Activated B cell treated with CpG ODN at 0.5 μM for 24 hours (primary cell): ENCODE measurements at regions of chr3 and their contacts with region 1.

Region 1: DNA sequence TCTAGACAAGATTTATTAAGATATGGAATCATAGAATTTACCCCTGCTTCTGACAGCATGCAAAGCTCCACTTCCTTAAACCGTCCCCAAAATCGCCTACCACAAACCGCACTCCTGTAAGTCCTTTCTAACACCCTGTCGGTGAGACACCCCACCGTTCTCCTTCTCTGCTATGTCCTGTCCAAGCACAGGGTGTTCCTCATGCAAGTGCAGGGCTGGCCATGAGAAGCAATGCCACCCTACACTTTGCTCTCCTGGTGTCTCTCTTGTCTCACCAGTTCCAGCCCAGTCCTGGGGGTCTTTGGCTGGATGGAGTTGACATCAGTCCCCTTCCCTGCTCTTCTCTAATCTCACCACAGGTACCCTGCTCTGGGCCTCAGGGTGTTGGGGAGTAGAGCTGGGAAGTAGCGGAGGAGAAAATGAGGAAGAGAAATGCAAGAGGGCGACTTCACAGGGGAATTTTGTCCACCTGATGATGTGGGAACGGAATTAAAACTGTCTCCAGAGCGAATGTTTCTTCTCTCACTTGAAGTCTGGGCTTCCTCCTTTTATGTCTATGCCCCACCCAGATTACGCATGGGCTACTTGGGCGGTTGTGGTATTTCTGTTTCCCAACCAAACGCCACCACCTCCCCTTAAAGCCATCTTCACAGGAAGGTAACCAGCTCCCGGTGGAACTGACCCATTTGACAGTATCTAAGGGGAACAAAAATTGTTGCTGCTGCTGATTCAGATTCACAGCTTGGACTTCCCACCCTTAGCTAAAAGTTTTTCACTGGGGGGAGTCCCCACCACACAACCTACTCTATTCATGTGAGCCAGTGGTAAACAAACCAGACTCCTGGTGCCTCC is 49.9 kb downstream of the CASR start:
- DNase-seq: peak; percentile 29
- ATAC-seq: peak; percentile 77
- H3K4me3 Mint-ChIP-seq: peak overlapping the region; percentile 74
- H3K27ac Mint-ChIP-seq: peak overlapping the region; percentile 67
- H3K4me1 Mint-ChIP-seq: peaks cover 32% of the 10 kb centered on the region
- H3K27me3 Mint-ChIP-seq: no peaks in the 10 kb centered on the region
- CTCF ChIP-seq: no peak

Region 2: DNA sequence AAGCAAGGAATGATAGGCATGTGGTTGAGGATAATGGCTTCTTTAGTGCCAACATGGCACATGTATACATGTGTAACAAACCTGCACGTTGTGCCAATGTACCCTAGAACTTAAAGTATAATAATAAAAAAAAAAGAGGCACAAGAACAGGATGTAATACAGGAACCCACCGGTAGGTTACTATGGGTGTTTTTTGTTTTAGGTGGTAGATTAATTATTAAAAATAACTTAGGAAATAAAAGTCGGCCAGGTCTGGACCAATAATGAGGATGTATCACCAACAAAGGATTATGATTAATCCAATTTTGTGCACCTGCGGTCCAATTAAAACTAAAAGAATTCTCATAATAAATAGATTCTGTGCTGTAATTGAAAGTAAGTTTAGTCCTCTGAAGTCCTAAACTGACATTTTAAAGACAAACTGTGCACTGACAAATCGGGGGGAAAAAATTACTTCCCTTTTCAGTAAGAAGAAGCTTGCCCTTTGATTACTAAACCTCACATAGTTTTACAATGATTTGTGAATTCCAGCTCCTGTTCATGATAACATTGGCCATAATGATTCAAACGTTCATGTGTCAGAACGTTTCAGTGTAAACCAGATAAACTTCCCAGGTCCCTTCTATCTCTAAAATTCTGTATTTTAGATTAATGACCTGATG is 12.3 kb after region 1 on chr3:
- CTCF ChIA-PET with region 1: interaction called, 3 read pairs
- POLR2A ChIA-PET with region 1: interaction called, 7 read pairs
- intact Hi-C with region 1: loop called (anchors 1 kb)
- DNase-seq: no peak
- ATAC-seq: peak; percentile 14
- H3K4me3 Mint-ChIP-seq: peak overlapping the region; percentile 78
- H3K27ac Mint-ChIP-seq: peak overlapping the region; percentile 53
- H3K4me1 Mint-ChIP-seq: peaks cover 30% of the 10 kb centered on the region
- H3K27me3 Mint-ChIP-seq: peaks cover under 1% of the 10 kb centered on the region
- CTCF ChIP-seq: peak; percentile 69